IMR-90 (cell line): ENCODE measurements at regions of chr2 and their contacts with region 1.

Region 1: DNA sequence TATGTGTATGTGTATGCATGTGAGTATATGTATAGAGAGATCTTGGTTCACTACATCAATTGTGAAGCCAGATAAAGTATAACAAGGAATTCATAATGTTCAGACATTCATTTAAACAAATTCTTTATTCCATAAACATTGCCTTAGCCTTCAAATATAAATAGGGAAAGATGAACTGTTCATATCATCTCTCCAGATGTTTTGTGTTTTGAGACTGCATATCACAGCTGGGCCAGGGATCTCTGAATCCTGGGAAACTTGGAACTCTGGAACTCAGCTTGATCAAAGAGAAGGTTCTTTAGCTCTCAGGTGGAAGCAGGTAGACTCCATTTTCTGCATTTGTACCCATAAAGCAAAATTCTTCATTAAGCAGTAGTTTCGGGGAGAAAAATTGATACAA is 272.6 kb upstream of the ETAA1 start:
- DNase-seq: peak; percentile 8
- ATAC-seq: no peak; the same call in 1 of the 2 replicates
- H3K4me3 ChIP-seq: no peak overlapping the region
- H3K27ac ChIP-seq: no peak overlapping the region
- H3K4me1 ChIP-seq: 0 out of 2 replicates have a peak, but pooled peaks cover 2% of the 10 kb centered on the region
- H3K27me3 ChIP-seq: no peaks in the 10 kb centered on the region
- CTCF ChIP-seq: no peak
- POLR2A ChIP-seq: no peak
- RAD21 ChIP-seq: no peak

Region 2: DNA sequence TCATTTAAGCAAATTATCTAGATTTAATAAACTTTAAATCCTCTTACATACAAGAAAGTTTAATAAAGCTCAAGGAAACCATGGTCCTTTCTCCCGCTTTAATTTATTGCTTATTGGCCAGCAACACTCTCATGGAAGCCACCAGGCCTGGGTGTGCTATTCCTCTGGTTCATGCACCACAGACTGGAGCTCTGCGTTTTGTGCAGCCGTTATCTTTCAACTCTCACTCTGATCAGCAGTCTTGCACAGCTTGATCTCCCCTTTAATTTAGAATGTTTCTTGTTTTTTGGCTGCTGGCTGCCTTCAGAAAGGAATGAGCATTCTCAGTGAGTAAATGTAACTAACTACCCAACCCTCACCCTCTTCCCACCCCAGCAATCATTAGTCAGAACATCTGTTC is 370.9 kb before region 1 on chr2:
- CTCF ChIA-PET with region 1: no interaction called
- POLR2A ChIA-PET with region 1: no interaction called
- dilution Hi-C with region 1: no loop called
- in situ Hi-C with region 1: no loop called
- intact Hi-C with region 1: loop called (anchors 5 kb)
- DNase-seq: no peak
- ATAC-seq: no peak
- H3K4me3 ChIP-seq: no peak overlapping the region
- H3K27ac ChIP-seq: no peak overlapping the region
- H3K4me1 ChIP-seq: no peaks in the 10 kb centered on the region
- H3K27me3 ChIP-seq: no peaks in the 10 kb centered on the region
- CTCF ChIP-seq: no peak
- POLR2A ChIP-seq: no peak
- RAD21 ChIP-seq: no peak

Region 3: DNA sequence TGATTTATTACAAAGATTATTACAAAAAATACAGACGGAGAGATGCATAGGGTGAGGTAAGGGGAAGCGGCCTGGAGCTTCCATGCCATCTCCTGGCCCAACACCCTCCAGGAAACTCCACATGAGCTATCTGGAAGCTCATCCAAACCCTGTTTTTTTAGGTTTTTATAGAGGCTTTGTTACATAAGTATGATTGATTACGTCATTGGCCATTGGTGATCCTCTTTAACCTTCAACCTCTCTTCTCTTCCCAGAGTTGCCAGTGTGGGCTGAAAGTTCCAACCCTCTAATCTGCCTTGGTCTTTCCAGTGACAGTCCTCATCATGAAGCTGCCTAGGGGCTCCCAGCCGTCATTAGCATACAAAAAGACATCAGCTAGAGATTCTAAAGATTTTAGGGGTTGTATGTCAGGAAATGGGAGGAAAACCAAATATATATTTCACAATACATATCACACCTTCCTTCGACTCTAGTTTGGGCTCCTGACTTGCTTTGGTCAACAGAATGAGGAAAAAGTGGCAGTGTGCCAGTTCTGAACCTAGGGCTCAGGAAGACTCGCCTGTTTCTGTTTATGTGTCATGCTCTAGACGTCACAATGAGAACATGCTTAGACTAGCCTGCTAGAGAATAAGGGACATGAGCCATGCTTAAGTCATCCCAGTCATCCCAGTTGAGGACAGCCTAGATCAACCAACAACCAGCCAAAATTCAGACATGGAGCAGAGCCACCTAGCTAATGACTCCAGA is 326.7 kb after region 1 on chr2:
- CTCF ChIA-PET with region 1: no interaction called
- POLR2A ChIA-PET with region 1: no interaction called
- dilution Hi-C with region 1: no loop called
- in situ Hi-C with region 1: no loop called
- intact Hi-C with region 1: no loop called
- DNase-seq: peak; percentile 85
- ATAC-seq: no peak
- H3K4me3 ChIP-seq: no peak overlapping the region
- H3K27ac ChIP-seq: no peak overlapping the region
- H3K4me1 ChIP-seq: peaks cover 3% of the 10 kb centered on the region; the same call in 1 of the 2 replicates
- H3K27me3 ChIP-seq: no peaks in the 10 kb centered on the region
- CTCF ChIP-seq: no peak
- POLR2A ChIP-seq: no peak
- RAD21 ChIP-seq: no peak

Region 4: DNA sequence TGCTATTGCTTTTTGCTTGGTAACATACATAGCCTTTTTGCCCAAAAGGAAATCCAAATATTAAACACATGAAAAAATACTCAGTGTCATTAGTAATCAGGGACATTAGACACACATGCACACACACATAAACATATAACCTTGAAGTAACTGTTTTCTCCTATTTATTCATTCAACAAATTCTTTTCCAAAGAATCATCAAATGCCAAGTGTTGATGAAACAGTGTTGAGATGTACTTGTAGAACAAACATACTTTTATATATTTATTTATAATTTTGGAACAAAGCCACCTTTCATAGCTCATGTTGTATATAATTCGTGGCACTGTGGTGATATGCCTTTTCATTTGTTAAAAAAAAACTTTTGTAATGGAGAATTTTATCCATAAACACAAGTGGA is 1423.9 kb after region 1 on chr2:
- CTCF ChIA-PET with region 1: no interaction called
- POLR2A ChIA-PET with region 1: no interaction called
- dilution Hi-C with region 1: no loop called
- in situ Hi-C with region 1: no loop called
- intact Hi-C with region 1: no loop called
- DNase-seq: peak; percentile 75
- ATAC-seq: peak; percentile 72
- H3K4me3 ChIP-seq: no peak overlapping the region
- H3K27ac ChIP-seq: no peak overlapping the region
- H3K4me1 ChIP-seq: no peaks in the 10 kb centered on the region
- H3K27me3 ChIP-seq: no peaks in the 10 kb centered on the region
- CTCF ChIP-seq: no peak
- POLR2A ChIP-seq: no peak
- RAD21 ChIP-seq: no peak